ENCODE measurements at regions of chr5 and their contacts with region 1.

Region 1: DNA sequence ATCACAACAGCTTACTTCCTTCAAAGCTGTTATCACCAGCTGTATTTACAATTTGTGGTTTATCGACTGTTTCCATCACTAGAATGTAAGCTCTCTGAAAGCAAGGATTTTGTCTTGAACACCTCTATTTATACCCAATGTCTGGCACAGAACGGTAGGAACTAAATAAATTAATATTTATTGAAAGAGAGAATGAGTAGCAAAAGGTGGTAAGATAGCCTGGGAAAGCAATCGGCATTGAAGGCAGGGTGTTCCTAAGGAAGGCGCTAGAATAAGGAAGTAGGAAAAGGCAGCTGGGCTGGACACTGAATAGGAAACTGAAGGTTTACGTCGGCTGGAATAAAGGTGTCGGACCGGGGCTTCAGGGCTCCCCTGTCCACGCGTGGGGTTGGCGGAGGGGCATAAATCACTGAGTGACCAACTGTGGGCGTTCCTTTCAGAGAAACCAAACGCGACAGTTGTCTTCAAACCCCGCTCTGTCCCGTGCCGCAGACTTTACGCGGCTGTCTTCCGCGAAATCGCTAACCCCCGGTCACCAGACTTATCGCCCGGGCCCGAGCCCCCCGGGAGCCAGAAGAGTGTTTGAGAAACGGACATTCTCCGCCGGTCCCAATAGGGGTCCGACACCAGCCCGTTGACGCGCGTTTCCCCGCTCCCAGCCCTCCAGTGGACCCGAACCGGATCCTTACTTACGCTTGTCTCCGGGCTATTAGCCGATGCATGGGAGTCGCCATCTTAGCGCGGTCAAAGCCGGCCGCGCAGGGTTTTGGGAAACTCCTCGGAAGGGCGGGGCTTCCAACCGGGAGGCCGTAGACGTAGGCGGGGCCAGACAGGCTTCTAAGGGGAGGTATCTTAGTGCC is at the start of gene ZCCHC10:
- DNase-seq: peak; percentile 79
- H3K4me3 ChIP-seq: peak within 1 kb of the TSS; percentile 90
- H3K27ac ChIP-seq: peak within 1 kb of the TSS; percentile 92
- H3K27me3 ChIP-seq: no peaks in the 10 kb centered on the region
- CTCF ChIP-seq: no peak
- polyA plus RNA-seq, gene ZCCHC10: 27.7 and 28.8 TPM in 2 replicates

Region 2: GRCh38 chr5:132662925-132663770 is 362.9 kb before region 1 on chr5:
- CTCF ChIA-PET with region 1: no interaction called
- POLR2A ChIA-PET with region 1: no interaction called
- DNase-seq: no peak
- H3K4me3 ChIP-seq: no peak overlapping the region
- H3K27ac ChIP-seq: no peak overlapping the region
- H3K27me3 ChIP-seq: no peaks in the 10 kb centered on the region
- CTCF ChIP-seq: peak; percentile 9; the same call in 1 of the 2 replicates

Region 3: DNA sequence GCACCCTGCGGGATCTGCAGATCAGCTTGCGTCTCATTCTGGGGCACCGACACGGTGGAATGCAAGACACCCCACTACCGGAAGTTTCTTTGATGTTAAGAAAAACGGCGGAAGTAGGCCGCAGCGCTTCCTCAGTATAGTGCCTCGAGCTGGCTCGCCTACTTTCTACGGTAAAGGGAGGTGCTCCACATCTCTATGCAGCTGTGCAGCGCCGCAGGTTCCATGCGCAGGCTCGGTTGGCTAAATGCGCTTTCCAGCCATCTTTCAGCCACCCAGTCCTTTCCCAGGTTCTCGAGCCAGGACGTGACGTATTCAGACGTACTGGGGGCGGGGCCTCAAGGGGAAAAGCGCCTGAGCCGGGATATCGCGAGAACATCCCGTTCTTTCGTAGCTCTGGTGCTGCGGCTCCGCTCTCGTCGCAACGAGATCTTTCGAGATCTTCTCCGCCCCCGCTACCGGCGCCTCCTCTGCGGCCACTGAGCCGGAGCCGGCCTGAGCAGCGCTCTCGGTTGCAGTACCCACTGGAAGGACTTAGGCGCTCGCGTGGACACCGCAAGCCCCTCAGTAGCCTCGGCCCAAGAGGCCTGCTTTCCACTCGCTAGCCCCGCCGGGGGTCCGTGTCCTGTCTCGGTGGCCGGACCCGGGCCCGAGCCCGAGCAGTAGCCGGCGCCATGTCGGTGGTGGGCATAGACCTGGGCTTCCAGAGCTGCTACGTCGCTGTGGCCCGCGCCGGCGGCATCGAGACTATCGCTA is 25.7 kb after region 1 on chr5 and contains the start of gene HSPA4:
- CTCF ChIA-PET with region 1: interaction called, 3 read pairs
- POLR2A ChIA-PET with region 1: interaction called, 11 read pairs
- DNase-seq: peak; percentile 98
- H3K4me3 ChIP-seq: peak within 1 kb of the TSS; percentile 96
- H3K27ac ChIP-seq: peak within 1 kb of the TSS; percentile 99
- H3K27me3 ChIP-seq: no peaks in the 10 kb centered on the region
- CTCF ChIP-seq: no peak
- polyA plus RNA-seq, gene HSPA4: 63.8 and 96.9 TPM in 2 replicates

Region 4: DNA sequence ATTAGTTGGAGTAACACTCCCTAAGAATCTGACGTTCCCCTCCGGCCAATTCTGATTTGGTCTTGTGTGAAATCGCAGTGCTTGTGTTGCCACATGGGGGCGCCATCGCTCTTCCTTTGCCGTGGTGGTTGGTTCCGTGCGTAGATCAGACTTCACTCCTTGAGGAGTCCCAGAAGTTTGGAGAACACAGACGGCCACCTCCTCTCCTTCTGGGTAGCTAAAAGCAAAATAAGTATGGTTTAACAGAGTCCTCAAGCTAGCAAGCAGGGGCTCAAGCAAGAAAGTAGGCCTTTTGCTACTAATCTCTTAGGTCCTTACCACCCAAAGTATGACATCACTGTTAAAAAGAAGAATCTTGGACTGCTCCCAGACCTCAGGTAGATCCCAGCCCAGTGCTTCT is 85.3 kb after region 1 on chr5:
- CTCF ChIA-PET with region 1: no interaction called
- POLR2A ChIA-PET with region 1: no interaction called
- DNase-seq: peak; percentile 63
- H3K4me3 ChIP-seq: no peak overlapping the region
- H3K27ac ChIP-seq: no peak overlapping the region
- H3K27me3 ChIP-seq: peaks cover 3% of the 10 kb centered on the region
- CTCF ChIP-seq: peak; percentile 95